HepG2 (cell line): ENCODE measurements at regions of chr4 and their contacts with region 1.

Region 1: DNA sequence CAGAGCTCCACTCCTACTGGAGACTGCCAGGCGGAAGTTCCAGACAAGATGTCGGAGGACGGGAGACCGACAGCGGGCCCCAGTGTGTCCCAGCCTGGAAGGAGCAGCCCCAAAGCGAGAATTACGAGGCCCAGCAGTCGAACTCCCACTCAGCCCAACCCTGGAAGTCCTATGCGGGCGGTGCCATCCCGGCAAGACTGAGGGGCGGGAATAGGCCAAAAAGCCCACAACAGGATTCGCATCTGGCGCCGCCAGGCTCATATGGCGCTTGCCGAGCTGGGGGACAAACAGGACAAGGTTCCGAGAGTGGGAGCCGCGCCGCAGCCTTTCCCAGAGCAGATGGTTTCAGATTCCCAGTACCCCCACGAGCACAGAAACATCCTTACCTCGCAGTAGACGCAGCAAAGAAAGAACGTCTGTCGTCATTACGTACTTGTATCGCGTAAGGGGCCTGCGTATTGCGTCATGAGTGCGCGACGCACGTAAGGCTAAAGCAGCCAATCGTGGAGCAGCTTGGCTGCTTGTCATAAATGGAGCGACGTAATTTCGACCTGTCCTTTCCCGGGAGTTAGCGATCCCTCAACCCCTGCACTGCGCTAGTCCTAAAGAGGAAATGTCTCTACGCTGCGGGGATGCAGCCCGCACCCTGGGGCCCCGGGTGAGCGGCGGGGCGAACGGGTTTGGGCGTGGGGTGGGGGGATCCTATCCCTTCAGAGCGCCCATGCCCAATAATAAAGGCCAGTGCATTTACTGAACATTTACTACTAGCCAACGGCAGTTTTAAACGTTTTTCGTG is at the starts of genes LIAS and RPL9:
- DNase-seq: peak; percentile 96
- ATAC-seq: peak; percentile 95
- H3K4me3 ChIP-seq: peak within 1 kb of the TSS; percentile 84 to 97 (median 93)
- H3K27ac ChIP-seq: peak within 1 kb of the TSS; percentile 87
- H3K4me1 ChIP-seq: peaks cover 51% of the 10 kb centered on the region
- H3K27me3 ChIP-seq: no peaks in the 10 kb centered on the region; a peak in 1 of 5 replicates
- CTCF ChIP-seq: no peak
- EP300 ChIP-seq: peak in 1 of 2 experiments; percentile 25; a peak in 1 of 4 replicates
- POLR2A ChIP-seq: peak; percentile 97 to 99
- RAD21 ChIP-seq: no peak; the same call in 1 of the 2 replicates
- total RNA-seq, gene LIAS: 16.6 and 18.3 TPM in 2 replicates
- total RNA-seq, gene RPL9: 2,148 and 2,808 TPM in 2 replicates

Region 2: GRCh38 chr4:38461342-38461741 is 997.4 kb before region 1 on chr4:
- CTCF ChIA-PET with region 1: no interaction called
- POLR2A ChIA-PET with region 1: no interaction called
- in situ Hi-C with region 1: no loop called
- intact Hi-C with region 1: no loop called
- DNase-seq: no peak
- ATAC-seq: no peak
- H3K4me3 ChIP-seq: no peak overlapping the region
- H3K27ac ChIP-seq: no peak overlapping the region
- H3K4me1 ChIP-seq: peaks cover 9% of the 10 kb centered on the region
- H3K27me3 ChIP-seq: no peaks in the 10 kb centered on the region
- CTCF ChIP-seq: no peak
- EP300 ChIP-seq: no peak
- POLR2A ChIP-seq: no peak
- RAD21 ChIP-seq: no peak

Region 3: GRCh38 chr4:39365830-39366771 is 92.6 kb before region 1 on chr4 and contains the start of gene RFC1:
- CTCF ChIA-PET with region 1: no interaction called
- POLR2A ChIA-PET with region 1: interaction called, 30 read pairs
- in situ Hi-C with region 1: no loop called
- intact Hi-C with region 1: no loop called
- DNase-seq: peak; percentile 87
- ATAC-seq: peak; percentile 81
- H3K4me3 ChIP-seq: peak within 1 kb of the TSS; percentile 76 to 85 (median 84)
- H3K27ac ChIP-seq: peak within 1 kb of the TSS; percentile 88
- H3K4me1 ChIP-seq: peaks cover 47% of the 10 kb centered on the region
- H3K27me3 ChIP-seq: no peaks in the 10 kb centered on the region; a peak in 1 of 5 replicates
- CTCF ChIP-seq: no peak; the same call in 1 of the 2 replicates
- EP300 ChIP-seq: no peak
- POLR2A ChIP-seq: peak; percentile 65 to 77
- RAD21 ChIP-seq: 0 out of 2 replicates have a peak, but pooled peaks have one; percentile 14
- total RNA-seq, gene RFC1: 78.8 and 118 TPM in 2 replicates

Region 4: DNA sequence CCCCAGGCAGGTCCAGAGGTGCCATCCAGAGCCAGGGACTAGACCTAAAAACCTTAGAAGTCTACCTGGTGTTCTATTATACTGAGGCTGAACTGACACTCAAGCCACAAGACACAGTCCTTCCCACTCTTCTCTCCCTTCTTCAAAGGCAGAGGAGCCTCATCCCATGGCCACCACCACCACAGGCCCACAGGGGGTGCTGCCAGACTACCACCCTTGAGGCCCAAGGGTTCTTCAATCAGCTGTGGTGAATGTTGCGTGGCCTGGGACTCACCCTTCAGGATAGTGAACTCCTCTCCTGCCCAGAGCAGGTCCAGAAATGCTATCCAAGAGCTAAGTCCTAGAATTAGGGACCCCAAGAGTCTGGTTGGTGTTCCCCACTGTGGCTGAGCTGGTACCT is 75.0 kb before region 1 on chr4:
- CTCF ChIA-PET with region 1: no interaction called
- POLR2A ChIA-PET with region 1: interaction called, 10 read pairs
- in situ Hi-C with region 1: no loop called
- intact Hi-C with region 1: no loop called
- DNase-seq: peak; percentile 12
- ATAC-seq: peak; percentile 81
- H3K4me3 ChIP-seq: no peak overlapping the region
- H3K27ac ChIP-seq: no peak overlapping the region
- H3K4me1 ChIP-seq: no peaks in the 10 kb centered on the region
- H3K27me3 ChIP-seq: no peaks in the 10 kb centered on the region
- CTCF ChIP-seq: peak; percentile 53
- EP300 ChIP-seq: no peak
- POLR2A ChIP-seq: no peak
- RAD21 ChIP-seq: no peak

Region 5: DNA sequence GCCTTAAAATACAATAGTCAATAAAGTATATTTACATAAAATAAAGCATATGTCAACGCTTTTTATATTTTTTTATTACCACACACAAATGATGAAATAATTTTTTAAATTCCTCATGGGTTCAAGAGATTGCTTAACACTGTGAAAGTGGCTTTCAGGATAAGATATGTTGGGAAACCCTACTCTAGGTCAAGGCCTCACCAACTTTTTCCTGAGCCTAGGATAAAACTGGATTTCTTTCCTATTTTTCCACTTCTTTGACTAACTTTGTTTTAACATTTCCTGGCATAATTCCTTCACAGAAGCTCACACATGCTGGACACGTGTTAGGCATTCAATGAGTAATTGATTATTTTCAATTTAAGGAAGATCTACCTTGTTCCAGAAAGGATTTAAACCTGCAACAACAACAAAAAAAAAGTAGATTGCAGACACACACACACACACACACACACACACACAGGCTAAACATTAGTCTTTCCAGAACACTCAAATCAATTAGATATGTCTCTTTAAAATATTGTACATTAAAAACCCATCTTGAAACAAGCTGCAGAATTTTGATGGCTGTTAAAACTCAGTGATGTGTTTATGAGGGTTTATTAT is 42.9 kb before region 1 on chr4:
- CTCF ChIA-PET with region 1: no interaction called
- POLR2A ChIA-PET with region 1: interaction called, 24 read pairs
- in situ Hi-C with region 1: no loop called
- intact Hi-C with region 1: loop called (anchors 2 kb)
- DNase-seq: peak; percentile 62
- ATAC-seq: no peak
- H3K4me3 ChIP-seq: no peak overlapping the region; a peak in 1 of 6 replicates
- H3K27ac ChIP-seq: peak overlapping the region; percentile 96
- H3K4me1 ChIP-seq: peaks cover 85% of the 10 kb centered on the region
- H3K27me3 ChIP-seq: no peaks in the 10 kb centered on the region
- CTCF ChIP-seq: no peak
- EP300 ChIP-seq: peak in 1 of 2 experiments; percentile 74; a peak in 2 of 4 replicates
- POLR2A ChIP-seq: no peak
- RAD21 ChIP-seq: no peak

Region 6: DNA sequence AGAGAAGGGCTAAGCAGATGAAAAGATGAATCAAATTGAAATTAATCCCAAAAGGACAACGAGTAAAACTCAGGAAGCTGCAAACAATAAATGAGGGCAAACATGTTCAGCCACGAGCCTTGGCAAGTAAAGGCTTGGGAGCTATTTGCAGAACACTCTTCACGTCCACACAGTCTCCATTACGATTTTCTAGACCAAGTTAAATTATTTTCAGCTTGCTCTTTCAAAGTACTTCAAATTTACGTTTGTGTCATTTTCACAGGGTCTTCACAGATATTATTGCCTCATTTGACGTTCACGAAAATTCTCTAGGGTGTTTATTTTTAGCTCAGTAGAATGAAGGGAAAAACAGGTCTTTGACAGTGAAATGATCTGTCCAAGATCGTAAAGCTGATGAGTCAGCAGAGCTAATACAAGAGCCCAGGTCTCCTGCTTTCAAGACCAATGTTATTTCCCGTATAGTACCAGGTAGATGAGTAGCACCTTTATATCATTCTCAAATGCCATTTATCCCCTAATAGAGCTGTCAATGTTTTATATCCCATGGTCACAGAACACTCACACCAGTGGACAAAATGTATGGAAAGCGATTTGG is 31.1 kb before region 1 on chr4:
- CTCF ChIA-PET with region 1: no interaction called
- POLR2A ChIA-PET with region 1: interaction called, 42 read pairs
- in situ Hi-C with region 1: no loop called
- intact Hi-C with region 1: no loop called
- DNase-seq: no peak
- ATAC-seq: no peak
- H3K4me3 ChIP-seq: no peak overlapping the region; a peak in 1 of 6 replicates
- H3K27ac ChIP-seq: peak overlapping the region; percentile 52
- H3K4me1 ChIP-seq: peaks cover 89% of the 10 kb centered on the region
- H3K27me3 ChIP-seq: no peaks in the 10 kb centered on the region
- CTCF ChIP-seq: no peak
- EP300 ChIP-seq: no peak
- POLR2A ChIP-seq: no peak
- RAD21 ChIP-seq: no peak

Region 7: DNA sequence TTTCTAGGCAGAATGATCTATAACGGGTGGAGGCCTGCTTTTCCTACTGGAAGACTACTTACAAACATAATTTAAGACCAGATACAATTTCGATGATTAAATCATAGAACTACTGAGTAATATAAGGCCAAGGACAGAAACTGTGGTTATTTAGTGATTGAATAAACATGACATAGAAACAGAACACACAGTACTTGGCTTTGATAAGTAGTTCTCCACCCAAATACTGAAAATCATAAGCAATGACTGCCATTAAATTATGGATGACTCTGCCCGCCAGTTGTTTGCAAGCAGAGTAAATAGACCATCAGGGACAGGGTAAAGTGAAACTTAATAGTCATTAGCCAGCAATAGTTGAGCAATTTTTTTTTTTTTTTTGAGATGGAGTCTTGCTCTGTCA is 197.2 kb after region 1 on chr4:
- CTCF ChIA-PET with region 1: no interaction called
- POLR2A ChIA-PET with region 1: no interaction called
- in situ Hi-C with region 1: no loop called
- intact Hi-C with region 1: no loop called
- DNase-seq: peak; percentile 17
- ATAC-seq: no peak
- H3K4me3 ChIP-seq: no peak overlapping the region
- H3K27ac ChIP-seq: no peak overlapping the region
- H3K4me1 ChIP-seq: peaks cover 15% of the 10 kb centered on the region
- H3K27me3 ChIP-seq: no peaks in the 10 kb centered on the region
- CTCF ChIP-seq: no peak
- EP300 ChIP-seq: no peak
- POLR2A ChIP-seq: no peak
- RAD21 ChIP-seq: no peak

Region 8: GRCh38 chr4:40255393-40256281 is 796.9 kb after region 1 on chr4:
- CTCF ChIA-PET with region 1: no interaction called
- POLR2A ChIA-PET with region 1: no interaction called
- in situ Hi-C with region 1: no loop called
- intact Hi-C with region 1: no loop called
- DNase-seq: peak; percentile 71
- ATAC-seq: peak; percentile 71
- H3K4me3 ChIP-seq: no peak overlapping the region
- H3K27ac ChIP-seq: no peak overlapping the region
- H3K4me1 ChIP-seq: peaks cover 32% of the 10 kb centered on the region
- H3K27me3 ChIP-seq: no peaks in the 10 kb centered on the region; a peak in 1 of 5 replicates
- CTCF ChIP-seq: no peak
- EP300 ChIP-seq: no peak
- POLR2A ChIP-seq: no peak
- RAD21 ChIP-seq: no peak